Activated naive CD8-positive, alpha-beta T cell treated with anti-CD3 and anti-CD28 coated beads, Interleukin-2, amount 10 ng/mL, durations not matched to agents 7 days and 5 days (primary cell): ENCODE measurements at regions of chr6 and their contacts with region 1.

Region 1: DNA sequence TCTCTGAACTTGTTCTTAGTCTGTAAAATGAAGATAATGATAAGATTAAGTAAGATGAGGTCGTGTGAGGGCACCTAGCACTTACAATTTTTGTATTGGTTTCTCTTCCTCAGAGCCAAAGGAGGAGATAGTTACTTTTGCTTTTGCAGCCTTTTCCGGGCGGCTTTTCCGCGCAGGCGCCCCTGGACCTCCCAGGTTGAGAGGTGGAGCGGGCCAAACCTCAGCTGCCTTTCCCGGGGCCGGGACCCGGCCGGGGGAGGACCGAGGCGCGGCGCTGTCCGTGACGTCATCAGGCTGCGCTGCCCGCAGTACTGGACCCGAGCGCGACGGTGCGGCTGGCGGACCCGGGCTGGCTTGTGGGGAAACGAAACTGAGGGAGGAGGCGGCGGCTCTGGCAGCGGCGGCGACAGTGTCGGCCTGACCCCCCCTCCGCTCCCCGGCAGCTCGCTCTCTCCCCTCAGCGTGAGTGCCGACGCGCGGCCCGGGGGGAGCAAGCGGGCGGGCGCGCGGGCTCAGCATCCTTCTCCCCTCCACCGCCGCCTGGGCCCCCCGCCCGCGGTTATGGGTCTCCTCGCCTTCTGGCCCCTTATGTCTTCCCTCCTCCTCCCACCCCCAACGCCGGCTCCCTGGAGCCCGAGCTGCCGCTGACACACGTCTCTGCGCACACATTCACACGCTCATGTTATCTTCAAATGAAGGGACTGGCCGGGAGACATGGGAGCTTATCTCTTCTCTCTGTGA is at the start of gene CMTR1:
- DNase-seq: peak; percentile 98
- ATAC-seq: peak; percentile 95
- H3K4me3 Mint-ChIP-seq: peak within 1 kb of the TSS; percentile 98
- H3K27ac Mint-ChIP-seq: peak within 1 kb of the TSS; percentile 100
- H3K4me1 Mint-ChIP-seq: peaks cover 27% of the 10 kb centered on the region
- H3K27me3 Mint-ChIP-seq: peaks cover 10% of the 10 kb centered on the region
- total RNA-seq, gene CMTR1: 83.9 to 89.7 TPM

Region 2: GRCh38 chr6:37499433-37500293 is 66.6 kb after region 1 on chr6 and contains the start of gene CCDC167:
- POLR2A ChIA-PET with region 1: interaction called, 17 read pairs
- DNase-seq: peak; percentile 93
- ATAC-seq: peak; percentile 94
- H3K4me3 Mint-ChIP-seq: peak within 1 kb of the TSS; percentile 97
- H3K27ac Mint-ChIP-seq: peak within 1 kb of the TSS; percentile 97
- H3K4me1 Mint-ChIP-seq: peaks cover 58% of the 10 kb centered on the region
- H3K27me3 Mint-ChIP-seq: no peaks in the 10 kb centered on the region
- total RNA-seq, gene CCDC167: 48.5 to 54.2 TPM

Region 3: DNA sequence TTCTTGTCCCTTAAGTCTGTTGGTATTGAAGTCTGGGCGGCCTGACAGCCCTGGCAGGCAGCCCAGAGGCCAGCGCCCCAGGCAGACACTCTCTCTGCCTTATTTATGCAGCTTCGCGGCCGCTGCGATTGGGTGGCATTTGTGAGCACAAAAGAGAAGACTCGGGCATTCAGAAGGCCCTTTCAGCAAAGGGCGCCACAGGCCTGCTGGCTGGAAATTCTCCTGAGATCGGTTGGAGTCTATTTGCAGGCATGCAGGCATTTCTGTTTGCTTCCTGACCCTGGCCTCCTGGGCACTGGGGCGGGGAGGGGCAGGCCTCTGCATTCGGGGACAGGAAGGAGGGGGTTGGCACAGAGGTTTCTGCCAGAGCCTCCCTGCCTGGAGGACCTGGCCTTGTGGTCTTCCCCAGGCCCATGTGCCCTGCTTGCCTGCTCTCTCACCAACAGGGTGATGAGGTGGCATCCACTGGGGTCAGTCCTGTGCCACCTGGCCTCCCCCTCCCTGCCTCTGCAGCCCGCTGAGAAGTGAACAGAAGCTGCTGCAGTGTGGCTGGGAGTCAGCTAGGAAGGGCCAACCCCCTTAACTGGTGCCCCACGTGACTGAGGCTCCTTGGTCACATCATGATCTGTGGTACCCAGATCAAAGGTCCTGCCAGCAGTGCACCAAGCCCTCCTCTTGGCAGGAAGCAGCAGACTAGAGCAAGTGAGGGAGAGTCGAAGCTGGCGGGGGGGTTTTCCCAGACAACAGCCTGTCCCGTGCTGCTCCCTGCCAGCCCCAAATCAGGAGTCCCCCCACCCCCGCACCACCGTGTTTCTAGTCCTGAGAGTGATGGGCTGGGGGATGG is 83.2 kb after region 1 on chr6:
- POLR2A ChIA-PET with region 1: interaction called, 23 read pairs
- DNase-seq: peak; percentile 76
- ATAC-seq: peak; percentile 86
- H3K4me3 Mint-ChIP-seq: peak overlapping the region; percentile 86
- H3K27ac Mint-ChIP-seq: peak overlapping the region; percentile 99
- H3K4me1 Mint-ChIP-seq: peaks cover 59% of the 10 kb centered on the region
- H3K27me3 Mint-ChIP-seq: no peaks in the 10 kb centered on the region

Region 4: GRCh38 chr6:37698261-37699137 is 265.4 kb after region 1 on chr6:
- POLR2A ChIA-PET with region 1: interaction called, 15 read pairs
- DNase-seq: peak; percentile 76
- ATAC-seq: peak; percentile 28
- H3K4me3 Mint-ChIP-seq: peak overlapping the region; percentile 92
- H3K27ac Mint-ChIP-seq: peak overlapping the region; percentile 94
- H3K4me1 Mint-ChIP-seq: peaks cover 23% of the 10 kb centered on the region
- H3K27me3 Mint-ChIP-seq: peaks cover 43% of the 10 kb centered on the region